Right ventricle myocardium inferior (tissue), 1 donor: ENCODE measurements at regions of chr7 and their contacts with region 1.

Region 1: GRCh38 chr7:107725151-107725740 is 18.7 kb upstream of the CBLL1 start:
- DNase-seq: no peak
- ATAC-seq: no peak

Region 2: DNA sequence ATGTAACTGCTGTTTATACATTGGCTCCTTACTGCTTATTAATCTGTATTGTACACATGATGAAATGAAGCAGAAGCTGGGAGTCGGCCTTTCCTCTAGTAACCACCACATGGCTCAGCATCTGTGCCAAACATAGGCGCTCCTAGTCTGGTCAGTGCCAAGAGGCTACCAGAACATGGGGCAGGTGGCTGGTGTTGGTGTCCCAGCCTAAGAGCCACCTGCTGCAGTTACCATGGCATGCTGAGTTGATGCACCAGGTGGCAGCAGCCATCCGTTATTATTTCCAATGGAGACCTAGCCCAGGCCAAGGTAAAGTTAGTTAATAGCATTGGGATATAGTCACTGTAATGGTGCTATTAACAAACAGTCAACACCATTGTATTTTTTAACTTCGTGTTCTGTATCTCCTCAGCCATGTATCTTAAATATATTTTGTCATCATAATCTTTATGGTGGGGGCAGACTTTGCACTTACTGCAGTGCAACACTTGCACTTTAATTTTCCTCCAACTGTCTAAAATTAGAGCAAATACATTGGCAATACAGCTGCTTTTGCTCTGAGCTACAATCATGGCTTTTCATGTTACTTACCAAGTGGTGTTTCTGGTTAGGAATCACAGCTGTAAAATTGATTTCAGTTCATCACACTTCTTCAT is 523.3 kb before region 1 on chr7:
- intact Hi-C with region 1: loop called (anchors 5 kb)
- DNase-seq: no peak
- ATAC-seq: peak; percentile 89

Region 3: DNA sequence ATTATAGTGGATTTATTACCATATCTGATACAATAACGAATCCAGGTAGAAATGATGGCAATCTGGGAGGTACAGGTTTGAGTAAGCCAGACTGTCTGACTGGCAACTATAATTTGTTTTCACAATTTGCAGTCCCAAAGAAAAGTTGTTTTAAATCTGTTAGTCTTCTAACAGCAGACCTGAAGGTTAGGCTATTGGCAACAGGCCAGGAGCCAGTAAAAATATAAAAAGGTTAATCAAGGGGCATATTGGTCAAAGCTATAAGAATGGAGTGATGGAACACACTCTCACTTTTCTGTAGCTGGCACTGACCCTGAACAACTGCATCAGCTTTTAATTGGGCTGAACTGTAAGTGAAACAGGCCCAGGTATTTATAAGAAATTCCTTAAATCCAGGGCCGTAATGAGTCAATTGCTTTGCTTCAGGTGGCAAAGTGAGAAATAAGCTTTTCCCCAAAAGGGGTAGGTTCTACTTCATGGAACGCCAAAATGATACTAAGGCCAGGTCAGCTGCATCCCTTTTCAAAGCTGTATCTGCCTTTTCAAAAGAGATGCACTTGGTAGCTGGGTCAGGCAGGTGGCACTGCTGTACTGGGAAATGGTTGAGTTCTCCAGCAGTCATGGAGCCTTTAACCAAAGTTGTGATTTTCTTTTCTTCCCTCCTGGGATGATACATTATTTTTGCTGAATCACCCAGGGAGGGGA is 262.4 kb before region 1 on chr7:
- intact Hi-C with region 1: loop called (anchors 1 kb)
- DNase-seq: no peak
- ATAC-seq: peak; percentile 87

Region 4: GRCh38 chr7:107666790-107667189 is 58.5 kb before region 1 on chr7:
- intact Hi-C with region 1: no loop called
- DNase-seq: no peak
- ATAC-seq: no peak

Region 5: GRCh38 chr7:107694386-107694785 is 30.9 kb before region 1 on chr7:
- intact Hi-C with region 1: no loop called
- DNase-seq: no peak
- ATAC-seq: peak; percentile 65

Region 6: DNA sequence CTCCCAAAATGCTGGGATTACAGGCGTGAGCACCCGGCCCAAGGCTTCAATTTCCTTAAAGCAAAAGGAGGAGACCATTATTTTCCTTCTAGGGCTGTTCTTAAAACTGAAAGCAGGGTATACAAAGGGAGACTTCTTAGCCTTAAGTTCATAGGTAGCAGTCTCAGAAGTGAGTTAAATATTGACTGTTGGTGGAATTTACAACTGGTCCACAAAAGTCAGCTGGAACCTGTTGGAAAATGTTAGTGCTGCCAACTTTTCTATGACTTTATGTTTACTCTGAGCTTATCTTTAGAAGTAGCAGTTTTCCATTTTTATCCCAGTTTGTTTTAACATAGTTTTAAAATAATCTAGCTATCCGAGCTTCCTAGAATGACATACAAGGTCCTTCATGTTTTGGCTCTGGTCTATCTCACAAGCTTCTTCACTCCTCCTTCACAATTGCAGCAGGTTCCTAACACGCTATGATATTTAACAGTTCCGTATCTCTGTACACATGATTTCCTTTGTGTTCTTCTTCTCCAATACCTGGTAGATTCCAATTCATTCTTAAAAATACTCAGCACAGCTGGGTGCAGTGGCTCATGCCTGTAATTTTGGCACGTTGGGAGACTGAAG is 74.5 kb after region 1 on chr7:
- intact Hi-C with region 1: no loop called
- DNase-seq: no peak
- ATAC-seq: no peak

Region 7: GRCh38 chr7:107865956-107866775 is 140.9 kb after region 1 on chr7:
- intact Hi-C with region 1: no loop called
- DNase-seq: no peak
- ATAC-seq: no peak